ENCODE measurements at regions of chr17 and their contacts with region 1.

Region 1: GRCh38 chr17:77247048-77247541 is 106.3 kb downstream of the SEC14L1 start:
- DNase-seq: no peak
- ATAC-seq: peak; percentile 88
- H3K4me3 ChIP-seq: peak overlapping the region; percentile 73
- H3K27ac ChIP-seq: peak overlapping the region; percentile 44
- H3K4me1 ChIP-seq: peaks cover 27% of the 10 kb centered on the region
- H3K27me3 ChIP-seq: no peaks in the 10 kb centered on the region; a peak in 2 of 4 replicates
- CTCF ChIP-seq: peak; percentile 80 to 89 (median 80)
- EP300 ChIP-seq: no peak
- POLR2A ChIP-seq: no peak
- RAD21 ChIP-seq: peak; percentile 84

Region 2: GRCh38 chr17:76868176-76868668 is 378.9 kb before region 1 on chr17 and contains the start of gene MGAT5B:
- CTCF ChIA-PET with region 1: interaction called, 3 read pairs
- POLR2A ChIA-PET with region 1: no interaction called
- RAD21 ChIA-PET with region 1: no interaction called
- SMC1A ChIA-PET with region 1: no interaction called
- in situ Hi-C with region 1: loop called (anchors 5 kb)
- intact Hi-C with region 1: loop called (anchors 10 kb)
- DNase-seq: no peak
- ATAC-seq: peak; percentile 99
- H3K4me3 ChIP-seq: no peak within 1 kb of the TSS
- H3K27ac ChIP-seq: no peak within 1 kb of the TSS
- H3K4me1 ChIP-seq: no peaks in the 10 kb centered on the region; the same call in 1 of the 2 replicates
- H3K27me3 ChIP-seq: peaks cover 0 to 5% of the 10 kb centered on the region in 2 experiments; a peak in 3 of 4 replicates
- CTCF ChIP-seq: peak; percentile 71 to 91 (median 74); a peak in 5 of 6 replicates
- EP300 ChIP-seq: no peak
- POLR2A ChIP-seq: no peak
- RAD21 ChIP-seq: peak; percentile 90
- polyA plus RNA-seq, gene MGAT5B: not detected

Region 3: DNA sequence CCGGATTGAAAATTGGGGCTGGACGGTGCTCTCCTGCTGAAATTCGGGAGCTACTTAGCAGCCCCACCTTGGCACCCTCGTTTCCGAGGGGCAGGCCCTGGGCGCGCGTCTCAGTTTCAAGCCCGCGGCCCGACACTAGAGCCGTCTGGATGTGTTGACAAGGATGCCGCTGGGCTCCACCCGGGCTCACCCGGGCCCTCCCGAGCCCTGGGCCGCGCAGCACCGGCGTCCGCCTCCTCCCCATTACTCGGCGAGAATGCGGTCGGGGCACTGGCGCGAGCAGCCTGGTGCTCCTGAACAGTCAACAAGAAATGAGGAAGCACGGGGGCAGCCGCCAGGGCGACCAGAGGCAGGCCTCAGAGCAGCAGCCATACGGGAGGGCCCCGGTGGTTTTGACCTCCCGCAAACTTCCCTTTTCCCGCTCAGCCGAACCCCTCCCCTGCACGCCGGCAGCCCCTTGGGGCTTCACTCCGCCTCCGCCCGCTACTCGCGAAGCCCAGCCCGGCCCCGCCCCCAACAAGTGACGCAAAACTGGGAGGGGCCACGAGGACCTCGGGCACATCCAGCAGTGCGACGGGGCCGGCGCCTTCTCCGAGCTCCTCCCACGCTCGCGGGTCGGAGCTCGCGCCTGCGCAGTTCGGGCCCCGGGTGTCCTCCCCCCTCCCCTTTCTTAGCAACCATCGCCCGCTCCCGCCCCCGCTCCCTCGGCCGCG is 106.8 kb before region 1 on chr17:
- CTCF ChIA-PET with region 1: interaction called, 3 read pairs
- POLR2A ChIA-PET with region 1: interaction called, 3 read pairs
- RAD21 ChIA-PET with region 1: interaction called, 4 read pairs
- SMC1A ChIA-PET with region 1: interaction called, 3 read pairs
- in situ Hi-C with region 1: no loop called
- intact Hi-C with region 1: loop called (anchors 2 kb)
- DNase-seq: peak; percentile 93
- ATAC-seq: peak; percentile 83
- H3K4me3 ChIP-seq: peak overlapping the region; percentile 34
- H3K27ac ChIP-seq: peak overlapping the region; percentile 84
- H3K4me1 ChIP-seq: peaks cover 17% of the 10 kb centered on the region
- H3K27me3 ChIP-seq: no peaks in the 10 kb centered on the region
- CTCF ChIP-seq: no peak
- EP300 ChIP-seq: peak; percentile 58 to 70; a peak in 2 of 4 replicates
- POLR2A ChIP-seq: peak; percentile 88
- RAD21 ChIP-seq: peak; percentile 12; the same call in 1 of the 2 replicates

Measured in GM12878 (cell line).